Natural killer cell (primary cell): ENCODE measurements at regions of chr15 and their contacts with region 1.

Region 1: GRCh38 chr15:75201609-75202250 is at the start of gene C15orf39:
- DNase-seq: peak; percentile 85 to 88
- ATAC-seq: peak; percentile 58 to 80 (median 67)
- H3K4me3 ChIP-seq: peak within 1 kb of the TSS; percentile 59
- H3K4me3 Mint-ChIP-seq: peak within 1 kb of the TSS; percentile 93
- H3K27ac ChIP-seq: peak within 1 kb of the TSS; percentile 74
- H3K27ac Mint-ChIP-seq: peak within 1 kb of the TSS; percentile 88 to 93
- H3K4me1 ChIP-seq: peaks cover 67% of the 10 kb centered on the region
- H3K4me1 Mint-ChIP-seq: peaks cover 46 to 76% of the 10 kb centered on the region in 2 donors
- H3K27me3 ChIP-seq: no peaks in the 10 kb centered on the region
- H3K27me3 Mint-ChIP-seq: no peaks in the 10 kb centered on the region
- CTCF ChIP-seq: peak; percentile 99
- total RNA-seq, gene C15orf39: 63.5 to 89.2 (median 70.1) TPM

Region 2: DNA sequence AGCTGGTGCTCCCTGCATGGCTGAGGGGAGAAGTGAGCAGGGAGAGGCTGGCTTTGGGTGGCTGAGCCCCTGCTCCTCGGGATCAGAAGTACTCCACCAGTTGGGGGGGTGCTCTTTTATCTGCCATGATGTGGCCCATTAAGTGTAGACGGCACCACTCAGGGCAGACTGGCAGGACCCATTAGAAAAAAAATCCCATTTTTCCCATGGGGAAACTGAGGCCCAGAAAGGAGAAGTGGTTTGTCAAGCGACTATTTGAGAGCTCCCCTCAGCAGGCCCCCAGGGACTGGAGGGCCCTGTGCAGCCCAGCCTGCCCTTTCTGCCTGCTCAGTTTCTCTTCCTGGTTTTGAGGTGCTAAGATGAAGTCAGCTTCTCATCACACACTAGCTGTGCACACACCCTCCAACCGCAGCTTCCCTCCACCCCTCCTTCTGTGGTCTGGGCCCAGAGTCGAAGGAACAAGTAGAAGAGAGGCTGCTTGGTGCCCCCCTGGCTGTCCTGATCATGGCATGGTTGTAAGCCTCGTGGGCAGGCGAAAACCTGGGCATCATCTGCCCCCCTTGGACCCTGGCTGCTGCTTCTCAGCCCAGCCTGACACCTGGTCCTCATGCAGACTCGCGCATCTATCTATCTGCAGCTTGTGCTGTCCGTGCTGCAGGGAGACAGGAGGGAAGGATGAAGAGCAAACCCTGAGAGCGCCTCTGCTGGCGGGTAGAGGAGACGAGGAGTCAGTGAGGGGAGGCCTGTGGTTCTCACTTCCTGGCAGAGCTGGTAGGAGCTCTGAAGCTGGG is 414.3 kb before region 1 on chr15:
- intact Hi-C with region 1: loop called (anchors 10 kb)
- DNase-seq: peak; percentile 91 to 96
- ATAC-seq: peak; percentile 57 to 83 (median 75)
- H3K4me3 ChIP-seq: peak overlapping the region; percentile 43
- H3K4me3 Mint-ChIP-seq: peak overlapping the region; percentile 97
- H3K27ac ChIP-seq: peak overlapping the region; percentile 94
- H3K27ac Mint-ChIP-seq: peak overlapping the region; percentile 95 to 100
- H3K4me1 ChIP-seq: peaks cover 92% of the 10 kb centered on the region
- H3K4me1 Mint-ChIP-seq: peaks cover 87 to 98% of the 10 kb centered on the region in 2 donors
- H3K27me3 ChIP-seq: no peaks in the 10 kb centered on the region
- H3K27me3 Mint-ChIP-seq: no peaks in the 10 kb centered on the region
- CTCF ChIP-seq: peak; percentile 72

Region 3: DNA sequence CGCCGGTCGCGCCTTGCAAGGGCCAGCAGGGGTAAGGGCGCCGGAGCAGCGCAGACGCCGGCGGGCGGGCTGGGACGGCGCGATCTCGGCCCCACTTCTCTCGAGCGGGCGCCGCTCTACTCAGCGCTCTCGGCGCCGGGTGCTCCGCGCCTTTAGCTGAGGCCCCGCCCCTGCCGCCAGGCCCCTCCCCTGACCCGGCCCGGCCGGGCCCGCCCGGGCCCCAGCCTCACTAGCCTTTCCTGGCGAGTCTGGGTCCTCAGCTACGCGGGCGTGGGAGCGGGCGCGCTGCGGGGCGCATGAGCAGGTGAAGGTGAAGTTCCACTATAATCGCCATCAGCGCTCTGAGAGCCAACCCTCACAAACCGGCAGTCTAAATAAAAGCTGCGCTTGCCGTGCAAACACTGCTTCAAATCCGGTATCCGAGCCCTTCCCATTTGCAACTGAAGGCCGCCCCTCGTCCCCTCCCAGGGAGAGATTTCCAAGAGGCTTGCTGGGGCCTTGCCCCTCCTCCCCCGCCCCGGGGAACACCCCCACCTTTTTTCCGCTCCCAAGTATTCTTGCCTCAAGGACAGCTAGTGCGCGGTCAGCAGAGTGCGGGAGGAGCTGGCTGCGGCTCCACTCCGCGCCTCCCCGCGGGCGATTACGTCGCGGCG is 245.0 kb before region 1 on chr15 and contains the start of gene RPP25:
- intact Hi-C with region 1: loop called (anchors 2 kb)
- DNase-seq: peak; percentile 52 to 75
- ATAC-seq: peak; percentile 89 to 93 (median 92)
- H3K4me3 ChIP-seq: peak within 1 kb of the TSS; percentile 26
- H3K4me3 Mint-ChIP-seq: peak within 1 kb of the TSS; percentile 75
- H3K27ac ChIP-seq: no peak within 1 kb of the TSS
- H3K27ac Mint-ChIP-seq: no peak within 1 kb of the TSS
- H3K4me1 ChIP-seq: peaks cover 33% of the 10 kb centered on the region
- H3K4me1 Mint-ChIP-seq: peaks cover 6 to 22% of the 10 kb centered on the region in 2 donors
- H3K27me3 ChIP-seq: peaks cover 30% of the 10 kb centered on the region
- H3K27me3 Mint-ChIP-seq: peaks cover 38 to 43% of the 10 kb centered on the region in 2 donors
- CTCF ChIP-seq: no peak
- total RNA-seq, gene RPP25: 0.21 to 0.84 (median 0.50) TPM

Region 4: GRCh38 chr15:75042730-75043508 is 158.8 kb before region 1 on chr15:
- intact Hi-C with region 1: loop called (anchors 1 kb)
- DNase-seq: peak; percentile 70 to 81
- ATAC-seq: peak; percentile 86 to 92 (median 89)
- H3K4me3 ChIP-seq: no peak overlapping the region
- H3K4me3 Mint-ChIP-seq: peak overlapping the region; percentile 39
- H3K27ac ChIP-seq: peak overlapping the region; percentile 96
- H3K27ac Mint-ChIP-seq: peak overlapping the region; percentile 86 to 89
- H3K4me1 ChIP-seq: peaks cover 67% of the 10 kb centered on the region
- H3K4me1 Mint-ChIP-seq: peaks cover 62 to 72% of the 10 kb centered on the region in 2 donors
- H3K27me3 ChIP-seq: no peaks in the 10 kb centered on the region
- H3K27me3 Mint-ChIP-seq: no peaks in the 10 kb centered on the region
- CTCF ChIP-seq: peak; percentile 61

Region 5: DNA sequence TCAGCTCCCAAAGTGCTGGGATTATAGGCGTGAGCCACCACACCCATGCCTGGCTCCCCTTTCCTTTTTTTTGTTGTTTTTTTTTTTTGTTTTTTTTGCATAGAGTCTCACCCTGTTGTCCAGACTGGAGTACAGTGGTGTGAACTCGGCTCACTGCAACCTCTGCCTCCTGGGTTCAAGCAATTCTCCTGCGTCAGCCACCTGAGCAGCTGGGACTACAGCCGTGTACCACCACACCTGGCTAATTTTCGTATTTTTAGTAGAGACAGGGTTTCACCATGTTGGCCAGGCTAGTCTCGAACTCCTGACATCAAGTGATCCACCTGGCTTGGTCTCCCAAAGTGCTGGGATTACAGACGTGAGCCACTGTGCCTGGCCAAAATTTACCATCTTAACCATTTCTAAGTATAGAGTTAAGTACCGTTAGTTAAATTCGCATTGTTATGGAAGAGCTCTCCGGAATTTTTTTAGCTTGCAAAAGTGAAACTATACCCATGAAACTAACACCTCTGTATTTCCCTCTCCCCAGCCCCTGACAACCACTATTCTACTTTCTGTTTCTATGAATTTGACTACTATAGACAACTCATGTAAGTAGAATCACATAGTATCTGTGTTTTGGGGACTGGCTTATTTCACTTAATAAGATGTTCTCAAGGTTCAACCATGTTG is 71.0 kb before region 1 on chr15:
- intact Hi-C with region 1: loop called (anchors 1 kb)
- DNase-seq: peak in 1 of 2 donors; percentile 55
- ATAC-seq: peak; percentile 94 to 98 (median 96)
- H3K4me3 ChIP-seq: peak overlapping the region; percentile 32
- H3K4me3 Mint-ChIP-seq: peak overlapping the region; percentile 94
- H3K27ac ChIP-seq: peak overlapping the region; percentile 94
- H3K27ac Mint-ChIP-seq: peak overlapping the region; percentile 89 to 96
- H3K4me1 ChIP-seq: peaks cover 51% of the 10 kb centered on the region
- H3K4me1 Mint-ChIP-seq: peaks cover 34 to 50% of the 10 kb centered on the region in 2 donors
- H3K27me3 ChIP-seq: no peaks in the 10 kb centered on the region
- H3K27me3 Mint-ChIP-seq: no peaks in the 10 kb centered on the region
- CTCF ChIP-seq: no peak